ENCODE measurements at regions of chr9 and their contacts with region 1.

Region 1: GRCh38 chr9:73023025-73023541 is 70.2 kb upstream of the ALDH1A1 start:
- DNase-seq: peak in 5 of 6 donors; percentile 18 to 68 (median 47)
- ATAC-seq: peak; percentile 85 to 94 (median 92)
- H3K4me3 ChIP-seq: no peak overlapping the region
- H3K27ac ChIP-seq: no peak overlapping the region
- H3K4me1 ChIP-seq: peaks cover 4 to 6% (median 4%) of the 10 kb centered on the region in 3 donors
- H3K27me3 ChIP-seq: no peaks in the 10 kb centered on the region
- CTCF ChIP-seq: peak; percentile 50 to 73 (median 66)

Region 2: GRCh38 chr9:72864327-72864726 is 158.8 kb before region 1 on chr9:
- intact Hi-C with region 1: loop called in 2 of 3 experiments (anchors 5 to 10 kb)
- DNase-seq: no peak
- ATAC-seq: no peak
- H3K4me3 ChIP-seq: no peak overlapping the region
- H3K27ac ChIP-seq: no peak overlapping the region
- H3K4me1 ChIP-seq: peaks cover 0 to 8% (median 7%) of the 10 kb centered on the region in 3 donors
- H3K27me3 ChIP-seq: no peaks in the 10 kb centered on the region
- CTCF ChIP-seq: no peak

Measured in pancreas (tissue), 10 donors.